ENCODE measurements at regions of chr13 and their contacts with region 1.

Region 1: GRCh38 chr13:21579754-21580316 is 24.1 kb downstream of the MICU2 start:
- DNase-seq: peak; percentile 41
- H3K4me3 ChIP-seq: no peak overlapping the region
- H3K27ac ChIP-seq: peak overlapping the region; percentile 6
- H3K4me1 ChIP-seq: peaks cover 14% of the 10 kb centered on the region
- CTCF ChIP-seq: no peak

Region 2: DNA sequence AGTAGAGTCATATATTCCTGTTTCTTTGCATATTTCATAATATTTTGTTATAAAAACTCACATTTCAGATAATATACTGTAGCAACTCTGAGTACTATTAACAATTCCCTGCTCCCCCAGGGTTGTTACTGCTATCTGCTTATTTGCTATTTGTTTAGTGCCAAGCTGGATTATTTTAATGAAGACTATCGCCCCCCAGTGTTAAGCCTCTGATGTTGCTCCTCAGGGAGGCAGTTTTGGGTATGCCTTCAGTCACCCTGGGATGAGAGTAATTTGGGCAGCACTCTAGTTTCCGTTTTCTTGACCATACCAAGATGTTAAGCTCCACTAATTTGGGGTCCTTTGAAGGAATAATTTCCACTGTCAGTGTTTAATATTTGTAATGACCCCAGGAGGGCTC is 21.8 kb before region 1 on chr13:
- CTCF ChIA-PET with region 1: no interaction called
- POLR2A ChIA-PET with region 1: interaction called, 10 read pairs
- intact Hi-C with region 1: no loop called
- DNase-seq: peak; percentile 34
- H3K4me3 ChIP-seq: no peak overlapping the region
- H3K27ac ChIP-seq: no peak overlapping the region
- H3K4me1 ChIP-seq: no peaks in the 10 kb centered on the region
- CTCF ChIP-seq: peak; percentile 79

Region 3: DNA sequence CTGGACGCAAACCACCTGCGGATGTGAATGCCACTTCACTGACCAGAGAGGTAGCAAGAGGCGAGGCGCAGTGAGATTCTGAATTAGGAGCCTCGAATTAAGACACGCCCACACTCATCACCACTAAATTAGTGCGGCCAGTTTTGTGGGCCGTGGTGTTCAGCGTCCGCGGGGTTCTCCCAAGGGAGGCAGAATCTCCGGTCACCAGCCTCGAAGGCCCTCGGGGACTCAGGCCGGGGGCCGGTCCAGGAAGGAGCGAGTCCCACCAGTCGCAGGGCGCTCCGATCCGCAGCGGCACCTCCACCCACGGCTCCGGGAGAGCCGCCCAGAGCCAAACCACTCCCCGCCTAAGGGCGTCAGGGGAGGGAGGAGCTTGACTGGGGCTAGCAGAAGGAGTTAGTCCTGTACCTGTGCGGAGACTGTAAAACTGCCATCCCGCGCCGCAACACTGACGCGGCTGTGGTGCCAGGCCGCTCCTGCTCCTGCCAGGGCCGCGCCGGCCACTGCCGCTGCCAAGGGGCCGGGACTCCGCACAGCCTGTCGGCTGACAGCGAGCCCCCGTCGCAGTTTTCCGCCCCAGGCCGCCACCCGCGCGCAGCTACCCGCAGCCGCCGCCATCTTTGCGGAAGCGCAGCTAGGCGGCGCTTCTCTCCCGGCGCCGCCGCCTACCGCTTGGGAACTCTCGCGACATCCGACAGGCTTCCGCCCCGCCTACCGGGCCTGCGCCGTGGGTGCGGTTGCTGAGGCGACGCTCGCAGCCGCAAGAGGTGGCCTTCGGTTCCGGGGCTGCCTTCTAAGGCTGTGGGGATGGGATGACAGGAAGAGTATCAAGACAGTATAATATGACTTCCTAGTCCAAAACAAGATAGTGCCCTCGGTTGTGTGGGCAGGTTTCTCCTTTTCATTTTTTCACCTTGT is 24.0 kb after region 1 on chr13 and contains the start of gene MICU2:
- CTCF ChIA-PET with region 1: no interaction called
- POLR2A ChIA-PET with region 1: interaction called, 11 read pairs
- intact Hi-C with region 1: no loop called
- DNase-seq: peak; percentile 97
- H3K4me3 ChIP-seq: peak within 1 kb of the TSS; percentile 72
- H3K27ac ChIP-seq: peak within 1 kb of the TSS; percentile 73
- H3K4me1 ChIP-seq: peaks cover 13% of the 10 kb centered on the region
- CTCF ChIP-seq: no peak
- total RNA-seq, gene MICU2: 41.6 and 51.3 TPM in 2 replicates

Region 4: DNA sequence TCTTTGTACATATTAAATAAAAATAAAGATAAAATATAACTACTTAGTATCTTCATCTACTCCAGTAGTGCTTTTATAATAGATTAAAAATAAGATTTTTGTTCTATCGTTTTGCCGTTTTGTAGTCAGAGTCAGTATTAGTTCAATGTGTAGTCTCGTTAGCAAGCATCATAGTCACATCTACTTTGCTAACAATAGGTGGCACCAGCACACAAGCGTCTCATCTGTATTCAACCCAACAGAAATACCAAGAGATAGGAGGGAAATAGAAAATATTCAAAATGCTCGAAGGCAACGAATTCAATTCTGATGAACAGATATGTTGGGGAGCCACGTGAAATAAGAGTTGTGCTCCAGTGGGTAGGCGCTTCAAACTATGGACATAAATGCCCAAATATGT is 45.5 kb after region 1 on chr13:
- CTCF ChIA-PET with region 1: no interaction called
- POLR2A ChIA-PET with region 1: no interaction called
- intact Hi-C with region 1: no loop called
- DNase-seq: peak; percentile 50
- H3K4me3 ChIP-seq: no peak overlapping the region
- H3K27ac ChIP-seq: no peak overlapping the region
- H3K4me1 ChIP-seq: no peaks in the 10 kb centered on the region
- CTCF ChIP-seq: peak; percentile 83

Measured in OCI-LY7 (cell line).